Posterior vena cava (tissue), 2 donors: ENCODE measurements at regions of chr20 and their contacts with region 1.

Region 1: DNA sequence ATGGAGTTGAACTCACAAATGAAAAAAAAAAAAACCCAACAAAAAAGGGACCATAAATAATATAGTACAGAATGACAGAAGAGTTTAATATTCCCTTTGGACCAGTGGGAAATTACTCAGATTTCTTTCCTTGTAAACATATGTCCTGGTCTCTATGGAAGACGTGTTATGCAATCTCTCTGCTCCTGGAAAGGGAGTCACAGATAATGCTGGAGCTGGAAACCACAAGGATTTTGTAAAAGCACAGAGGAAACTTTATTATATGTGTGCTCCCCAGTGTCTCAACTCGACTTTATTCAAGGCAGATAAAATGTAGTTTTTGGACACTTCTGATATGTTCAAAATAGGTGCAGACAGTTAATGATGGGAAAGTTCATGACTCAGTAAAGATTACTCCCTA is 88.1 kb upstream of the ZFP64 start:
- DNase-seq: no peak

Region 2: DNA sequence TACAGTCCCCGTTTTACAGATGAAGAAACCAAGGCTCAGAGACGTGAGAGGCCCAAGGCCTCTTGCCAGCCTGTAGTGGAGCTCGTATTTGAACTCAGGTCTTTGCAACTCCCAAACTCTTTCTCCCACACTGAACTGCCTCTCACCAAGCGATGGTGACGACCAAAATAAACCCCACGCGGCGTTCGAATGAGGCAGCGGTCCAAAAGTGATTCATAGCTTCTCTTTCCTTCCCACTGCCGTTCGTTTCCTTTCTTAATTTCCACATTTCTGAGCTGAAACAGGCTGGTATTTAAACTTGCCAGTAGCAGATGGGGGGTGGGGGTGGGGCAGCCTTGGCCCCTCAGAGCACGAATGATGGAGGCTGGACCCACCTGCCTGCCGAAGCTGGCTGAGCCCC is 1003.9 kb before region 1 on chr20:
- intact Hi-C with region 1: loop called in 1 of 2 experiments (anchors 5 kb)
- DNase-seq: no peak

Region 3: DNA sequence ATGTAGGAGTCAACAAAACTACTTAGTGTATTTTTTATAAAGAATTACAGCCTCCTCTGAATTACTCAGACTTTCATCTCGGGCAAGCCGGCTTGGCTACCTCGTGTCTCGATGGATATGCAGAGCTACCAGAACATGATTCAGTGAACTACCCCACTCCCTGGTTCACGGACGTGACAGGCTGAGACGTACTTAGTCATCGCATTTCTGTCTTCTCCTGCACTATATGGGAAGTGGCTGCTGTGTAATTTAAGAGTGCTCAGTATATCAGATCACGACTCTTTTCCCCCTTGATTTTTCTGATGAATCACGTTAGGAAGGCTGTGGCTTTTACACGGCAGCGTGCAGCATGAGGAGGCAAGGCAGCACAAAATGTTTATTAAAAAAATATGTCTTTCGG is 214.5 kb after region 1 on chr20:
- intact Hi-C with region 1: no loop called
- DNase-seq: no peak